ENCODE measurements at regions of chr17 and their contacts with region 1.

Region 1: DNA sequence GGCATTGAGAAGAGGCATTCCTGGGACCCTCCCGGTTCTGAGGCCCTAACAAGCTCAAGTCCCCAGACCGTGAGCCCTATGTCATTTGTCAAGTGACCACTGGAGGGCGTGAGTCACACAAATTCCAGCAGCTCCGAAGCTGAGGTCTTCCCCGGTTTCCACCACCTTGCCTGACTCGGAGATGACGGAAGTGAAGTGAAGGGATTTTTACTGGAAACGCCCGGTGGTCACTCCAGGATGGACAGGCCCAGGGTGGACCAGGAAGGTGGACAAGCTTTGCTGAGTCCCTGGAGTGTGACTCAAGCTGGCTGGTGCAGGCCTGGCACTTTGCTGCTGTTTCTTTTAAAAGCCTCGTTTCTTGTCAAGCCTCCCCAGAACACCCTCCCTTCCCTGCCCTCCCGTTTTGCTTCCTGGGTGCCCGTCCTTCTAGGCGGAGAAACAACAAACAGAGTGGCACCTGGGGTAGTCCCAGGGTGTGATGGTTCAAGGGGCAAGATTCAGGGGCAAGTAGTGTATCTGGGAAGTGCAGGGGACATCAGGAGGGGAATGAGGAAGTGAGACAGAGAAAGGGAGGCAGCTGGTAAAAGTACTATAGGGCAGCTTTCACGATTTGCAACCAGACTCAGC is 5.3 kb upstream of the NOS2 start:
- DNase-seq: peak; percentile 82
- H3K4me3 ChIP-seq: peak overlapping the region; percentile 3 to 32; a peak in 3 of 4 replicates
- H3K27ac ChIP-seq: no peak overlapping the region
- H3K4me1 ChIP-seq: peaks cover 0 to 9% of the 10 kb centered on the region in 2 experiments; a peak in 1 of 4 replicates
- H3K27me3 ChIP-seq: no peaks in the 10 kb centered on the region
- CTCF ChIP-seq: peak; percentile 78
- EP300 ChIP-seq: no peak
- RAD21 ChIP-seq: peak; percentile 87

Region 2: GRCh38 chr17:27654654-27655524 is 150.7 kb before region 1 on chr17:
- CTCF ChIA-PET with region 1: interaction called, 13 read pairs
- POLR2A ChIA-PET with region 1: no interaction called
- DNase-seq: peak; percentile 93
- H3K4me3 ChIP-seq: peak overlapping the region in 1 of 2 experiments; percentile 43; a peak in 1 of 4 replicates
- H3K27ac ChIP-seq: no peak overlapping the region
- H3K4me1 ChIP-seq: no peaks in the 10 kb centered on the region; a peak in 1 of 4 replicates
- H3K27me3 ChIP-seq: no peaks in the 10 kb centered on the region
- CTCF ChIP-seq: peak; percentile 93
- EP300 ChIP-seq: no peak
- RAD21 ChIP-seq: peak; percentile 68

Region 3: GRCh38 chr17:27771586-27771985 is 34.0 kb before region 1 on chr17:
- CTCF ChIA-PET with region 1: interaction called, 13 read pairs
- POLR2A ChIA-PET with region 1: no interaction called
- DNase-seq: no peak
- H3K4me3 ChIP-seq: no peak overlapping the region
- H3K27ac ChIP-seq: no peak overlapping the region
- H3K4me1 ChIP-seq: no peaks in the 10 kb centered on the region; a peak in 1 of 4 replicates
- H3K27me3 ChIP-seq: no peaks in the 10 kb centered on the region
- CTCF ChIP-seq: no peak
- EP300 ChIP-seq: no peak
- RAD21 ChIP-seq: no peak

Region 4: DNA sequence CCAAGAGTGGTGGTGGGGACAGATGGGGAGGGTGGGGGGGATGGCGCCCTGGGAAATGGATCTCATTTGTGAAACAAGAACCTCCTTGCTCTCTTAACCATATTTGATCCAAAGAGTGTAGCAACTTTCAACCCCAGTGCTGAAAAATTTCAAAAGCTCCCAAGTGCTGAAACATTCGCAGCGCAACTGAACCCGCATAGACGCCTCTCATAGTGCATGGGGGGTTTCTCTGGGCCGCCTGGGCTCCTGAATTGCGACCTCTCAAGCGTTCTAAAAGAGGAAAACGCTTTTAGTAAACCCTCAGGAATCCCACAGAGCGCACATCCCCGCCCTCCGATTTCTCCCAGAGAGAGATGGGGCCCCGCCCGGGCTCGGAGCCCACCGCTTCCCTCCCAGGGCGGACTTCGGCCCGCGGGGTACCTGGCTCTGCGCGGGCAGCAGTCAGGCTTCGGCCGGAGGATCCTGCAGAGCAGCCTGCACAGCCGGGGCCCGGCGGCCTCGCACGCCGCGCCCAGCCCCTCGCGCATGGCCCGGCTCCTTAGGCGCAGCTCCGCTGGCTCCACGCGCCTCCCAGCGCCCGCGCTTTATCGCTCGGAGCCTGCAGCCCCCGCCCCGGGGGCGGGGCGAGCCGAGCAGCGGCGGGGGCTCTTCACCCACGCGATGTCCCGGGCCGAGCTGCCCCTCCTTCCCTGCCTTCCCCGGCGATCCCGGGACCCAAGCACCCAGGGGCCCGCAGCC is 12.3 kb before region 1 on chr17:
- CTCF ChIA-PET with region 1: interaction called, 41 read pairs
- POLR2A ChIA-PET with region 1: no interaction called
- DNase-seq: peak; percentile 90
- H3K4me3 ChIP-seq: peak overlapping the region; percentile 37 to 43
- H3K27ac ChIP-seq: no peak overlapping the region
- H3K4me1 ChIP-seq: peaks cover 0 to 3% of the 10 kb centered on the region in 2 experiments; a peak in 1 of 4 replicates
- H3K27me3 ChIP-seq: peaks cover 7% of the 10 kb centered on the region
- CTCF ChIP-seq: no peak
- EP300 ChIP-seq: no peak
- RAD21 ChIP-seq: no peak

Region 5: GRCh38 chr17:27834571-27834970 is 28.9 kb after region 1 on chr17:
- CTCF ChIA-PET with region 1: interaction called, 23 read pairs
- POLR2A ChIA-PET with region 1: no interaction called
- DNase-seq: no peak
- H3K4me3 ChIP-seq: no peak overlapping the region
- H3K27ac ChIP-seq: no peak overlapping the region
- H3K4me1 ChIP-seq: no peaks in the 10 kb centered on the region
- H3K27me3 ChIP-seq: no peaks in the 10 kb centered on the region
- CTCF ChIP-seq: no peak
- EP300 ChIP-seq: no peak
- RAD21 ChIP-seq: no peak

Region 6: DNA sequence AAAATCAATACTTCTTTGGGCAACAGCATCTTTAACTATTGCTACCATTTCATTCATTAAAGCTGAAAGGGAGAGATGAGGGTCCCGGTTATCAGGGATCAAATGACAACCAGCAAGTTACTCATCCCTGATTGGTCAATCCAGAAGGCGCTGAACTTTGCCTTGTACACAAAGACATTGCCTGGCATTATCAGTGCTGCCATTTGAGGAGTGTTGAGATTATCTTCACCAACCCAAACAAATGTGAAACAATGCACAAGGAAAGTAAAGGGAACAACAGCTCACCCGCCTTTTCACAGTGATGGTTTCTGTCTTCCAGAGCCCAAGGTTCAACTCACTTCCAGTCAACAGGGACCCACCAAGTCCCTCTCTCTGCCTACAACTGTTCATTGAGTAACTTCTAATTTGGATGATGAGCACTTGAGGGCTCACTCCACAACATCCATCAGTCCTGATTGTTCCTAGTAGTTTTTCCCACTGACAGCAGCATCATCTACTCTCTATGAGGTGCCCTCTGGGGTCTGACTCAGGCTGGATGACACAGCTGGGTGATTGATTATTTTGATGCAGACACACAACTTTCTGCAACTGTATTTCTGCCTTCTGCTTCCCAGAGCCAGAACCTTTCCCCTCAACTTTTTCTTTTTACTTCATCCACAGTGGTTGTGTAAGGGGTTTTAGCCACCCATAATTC is 55.5 kb after region 1 on chr17:
- CTCF ChIA-PET with region 1: interaction called, 14 read pairs
- POLR2A ChIA-PET with region 1: no interaction called
- DNase-seq: no peak
- H3K4me3 ChIP-seq: no peak overlapping the region
- H3K27ac ChIP-seq: no peak overlapping the region
- H3K4me1 ChIP-seq: no peaks in the 10 kb centered on the region
- H3K27me3 ChIP-seq: no peaks in the 10 kb centered on the region; the same call in 1 of the 2 replicates
- CTCF ChIP-seq: no peak
- EP300 ChIP-seq: no peak
- RAD21 ChIP-seq: no peak

Region 7: DNA sequence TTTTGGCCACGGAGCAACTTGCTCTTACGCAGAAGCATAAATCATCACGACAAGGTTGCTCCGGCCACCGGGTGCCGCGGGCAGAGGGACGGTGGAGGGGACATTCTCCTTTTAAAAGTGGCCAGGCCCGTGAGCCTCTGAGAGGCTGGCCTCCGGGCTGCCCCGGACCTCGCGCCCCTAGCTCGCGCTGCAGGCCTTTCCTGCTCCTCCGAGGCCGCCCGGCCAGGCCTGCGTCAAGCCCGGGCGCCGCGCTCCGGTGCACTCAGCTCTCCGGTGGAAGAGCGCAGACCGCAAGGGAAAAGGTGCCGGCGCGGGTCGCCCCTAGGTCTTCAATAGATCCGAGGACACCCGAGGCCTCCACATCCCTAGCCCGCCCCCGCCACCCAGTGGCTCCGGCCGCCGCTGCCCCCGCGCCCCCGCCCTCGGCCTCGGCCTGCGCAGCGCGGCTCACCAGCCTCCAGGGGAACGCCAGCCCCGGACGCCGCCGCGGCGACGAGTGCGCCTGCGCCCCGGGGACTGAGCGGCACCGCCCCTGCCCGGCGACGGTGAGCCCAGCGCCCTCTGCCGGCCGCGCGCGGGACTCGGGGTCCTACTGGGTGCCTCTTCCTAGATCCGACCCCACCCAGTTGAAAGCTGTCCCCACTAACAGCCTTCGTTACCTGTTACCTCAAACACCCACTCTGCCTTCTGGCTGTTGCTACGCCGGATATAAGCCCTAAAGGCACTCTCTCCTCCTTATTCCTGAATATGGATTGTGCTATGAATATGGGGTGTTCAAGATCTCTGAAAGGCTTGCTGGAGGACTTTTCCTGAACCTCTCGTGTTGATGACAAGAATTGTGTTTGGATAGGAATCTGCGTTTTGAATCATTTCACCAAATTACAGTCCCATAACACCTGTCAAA is 87.5 kb after region 1 on chr17 and contains the start of gene LYRM9:
- CTCF ChIA-PET with region 1: interaction called, 29 read pairs
- POLR2A ChIA-PET with region 1: interaction called, 3 read pairs
- DNase-seq: peak; percentile 98
- H3K4me3 ChIP-seq: peak within 1 kb of the TSS; percentile 63 to 70
- H3K27ac ChIP-seq: peak within 1 kb of the TSS; percentile 41 to 77; a peak in 2 of 4 replicates
- H3K4me1 ChIP-seq: peaks cover 0 to 5% of the 10 kb centered on the region in 2 experiments; a peak in 2 of 4 replicates
- H3K27me3 ChIP-seq: no peaks in the 10 kb centered on the region
- CTCF ChIP-seq: peak; percentile 91
- EP300 ChIP-seq: no peak
- RAD21 ChIP-seq: peak; percentile 44
- polyA plus RNA-seq, gene LYRM9: 4.6 and 5.7 TPM in 2 replicates

Region 8: GRCh38 chr17:27940503-27941428 is 135.1 kb after region 1 on chr17:
- CTCF ChIA-PET with region 1: no interaction called
- POLR2A ChIA-PET with region 1: no interaction called
- DNase-seq: no peak
- H3K4me3 ChIP-seq: no peak overlapping the region
- H3K27ac ChIP-seq: no peak overlapping the region
- H3K4me1 ChIP-seq: no peaks in the 10 kb centered on the region; a peak in 1 of 4 replicates
- H3K27me3 ChIP-seq: no peaks in the 10 kb centered on the region
- CTCF ChIP-seq: no peak
- EP300 ChIP-seq: no peak
- RAD21 ChIP-seq: no peak

Region 9: DNA sequence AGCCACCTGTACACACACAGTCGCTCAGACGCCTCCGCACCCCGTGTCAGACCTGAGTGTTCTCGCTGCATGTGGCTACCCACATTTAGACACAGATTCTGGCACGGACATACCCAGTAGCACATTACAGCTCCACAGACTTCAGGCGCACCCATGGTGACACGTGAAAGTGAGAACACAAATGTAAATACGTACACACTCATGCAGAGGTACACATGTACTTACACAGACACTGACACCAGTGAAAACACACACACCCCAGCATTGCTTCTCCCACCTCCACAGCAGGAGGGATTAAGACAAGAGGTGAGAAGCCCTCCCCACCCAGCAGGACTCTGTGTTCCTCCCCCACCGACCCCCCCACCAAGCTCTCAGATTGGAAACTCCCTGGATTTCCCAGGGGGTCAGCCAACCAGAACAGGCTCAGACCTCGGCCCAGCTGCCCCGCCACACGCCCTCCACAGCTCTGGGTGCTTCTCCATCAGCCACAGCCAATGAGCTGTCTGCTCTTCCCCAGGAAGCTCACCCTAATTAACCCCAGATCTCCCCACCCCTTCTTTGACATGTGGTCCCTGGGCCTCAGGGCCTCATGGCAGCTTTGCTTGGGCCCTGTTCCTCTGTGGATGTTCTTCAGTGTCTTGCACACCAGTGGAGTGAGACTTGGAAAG is 695.2 kb after region 1 on chr17:
- CTCF ChIA-PET with region 1: no interaction called
- POLR2A ChIA-PET with region 1: no interaction called
- DNase-seq: peak; percentile 73
- H3K4me3 ChIP-seq: no peak overlapping the region
- H3K27ac ChIP-seq: no peak overlapping the region
- H3K4me1 ChIP-seq: peaks cover 0 to 8% of the 10 kb centered on the region in 2 experiments; a peak in 1 of 4 replicates
- H3K27me3 ChIP-seq: peaks cover 11% of the 10 kb centered on the region; the same call in 1 of the 2 replicates
- CTCF ChIP-seq: no peak
- EP300 ChIP-seq: no peak
- RAD21 ChIP-seq: no peak